Calu3 (cell line): ENCODE measurements at regions of chr1 and their contacts with region 1.

Region 1: DNA sequence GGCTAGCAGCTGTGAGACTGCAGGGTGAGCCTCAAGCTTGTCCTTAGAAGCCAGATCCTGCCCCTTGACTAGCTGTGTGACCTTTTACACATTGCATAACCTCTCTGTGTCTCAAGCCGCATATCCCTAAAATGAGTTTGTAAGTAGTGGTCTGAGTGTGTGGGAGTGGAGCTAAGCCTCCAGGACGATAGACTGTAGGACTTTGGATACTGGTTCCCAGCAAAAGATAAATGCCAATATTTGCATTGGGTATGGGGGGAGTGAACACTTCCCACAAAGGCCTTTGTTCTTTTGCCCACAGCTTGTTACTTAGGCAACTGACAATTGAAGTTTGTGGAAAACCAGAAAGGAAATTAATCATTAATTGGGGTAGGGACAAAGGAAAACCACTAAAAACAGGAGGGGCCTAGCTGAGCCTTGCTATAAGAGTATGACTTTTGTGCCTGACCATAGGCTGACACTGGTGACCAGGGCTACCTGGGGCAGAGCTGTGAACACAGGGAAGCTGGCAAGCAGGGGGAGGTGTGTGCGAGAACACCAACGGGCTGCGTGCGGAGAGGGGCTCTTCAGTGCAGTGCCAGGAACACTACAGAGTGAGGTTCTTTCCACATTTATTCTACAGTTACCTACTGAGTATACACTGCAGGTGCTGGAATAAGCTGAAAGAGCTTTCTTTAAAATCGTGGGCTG is 102.4 kb upstream of the ETV3 start:
- DNase-seq: peak; percentile 90
- H3K4me3 Mint-ChIP-seq: peak overlapping the region; percentile 48
- H3K27ac Mint-ChIP-seq: peak overlapping the region; percentile 94
- H3K4me1 Mint-ChIP-seq: peaks cover 53% of the 10 kb centered on the region
- H3K27me3 Mint-ChIP-seq: no peaks in the 10 kb centered on the region
- CTCF ChIP-seq: no peak

Region 2: GRCh38 chr1:157056269-157056668 is 184.4 kb before region 1 on chr1:
- CTCF ChIA-PET with region 1: no interaction called
- intact Hi-C with region 1: no loop called
- DNase-seq: no peak
- H3K4me3 Mint-ChIP-seq: no peak overlapping the region
- H3K27ac Mint-ChIP-seq: no peak overlapping the region
- H3K4me1 Mint-ChIP-seq: no peaks in the 10 kb centered on the region
- H3K27me3 Mint-ChIP-seq: peaks cover 23% of the 10 kb centered on the region
- CTCF ChIP-seq: no peak

Region 3: GRCh38 chr1:157199421-157199755 is 41.3 kb before region 1 on chr1:
- CTCF ChIA-PET with region 1: interaction called, 3 read pairs
- intact Hi-C with region 1: loop called (anchors 2 kb)
- DNase-seq: no peak
- H3K4me3 Mint-ChIP-seq: no peak overlapping the region
- H3K27ac Mint-ChIP-seq: no peak overlapping the region
- H3K4me1 Mint-ChIP-seq: peaks cover 12% of the 10 kb centered on the region
- H3K27me3 Mint-ChIP-seq: peaks cover 15% of the 10 kb centered on the region
- CTCF ChIP-seq: no peak

Region 4: GRCh38 chr1:157403203-157403602 is 162.6 kb after region 1 on chr1:
- CTCF ChIA-PET with region 1: no interaction called
- intact Hi-C with region 1: no loop called
- DNase-seq: no peak
- H3K4me3 Mint-ChIP-seq: no peak overlapping the region
- H3K27ac Mint-ChIP-seq: no peak overlapping the region
- H3K4me1 Mint-ChIP-seq: peaks cover 8% of the 10 kb centered on the region
- H3K27me3 Mint-ChIP-seq: peaks cover 83% of the 10 kb centered on the region
- CTCF ChIP-seq: no peak

Region 5: GRCh38 chr1:157819896-157820295 is 579.3 kb after region 1 on chr1 and contains the start of gene FCRL1:
- CTCF ChIA-PET with region 1: interaction called, 12 read pairs
- intact Hi-C with region 1: no loop called
- DNase-seq: no peak
- H3K4me3 Mint-ChIP-seq: no peak within 1 kb of the TSS
- H3K27ac Mint-ChIP-seq: no peak within 1 kb of the TSS
- H3K4me1 Mint-ChIP-seq: no peaks in the 10 kb centered on the region
- H3K27me3 Mint-ChIP-seq: peaks cover 16% of the 10 kb centered on the region
- CTCF ChIP-seq: no peak
- total RNA-seq, gene FCRL1: not detected in 2 replicates